IMR-90 (cell line): ENCODE measurements at regions of chr9 and their contacts with region 1.

Region 1: GRCh38 chr9:68443624-68444023 is 87.2 kb downstream of the PGM5 start:
- DNase-seq: no peak
- ATAC-seq: no peak
- H3K4me3 ChIP-seq: no peak overlapping the region
- H3K27ac ChIP-seq: no peak overlapping the region
- H3K4me1 ChIP-seq: 0 out of 2 replicates have a peak, but pooled peaks cover 2% of the 10 kb centered on the region
- H3K27me3 ChIP-seq: no peaks in the 10 kb centered on the region
- CTCF ChIP-seq: no peak
- POLR2A ChIP-seq: no peak
- RAD21 ChIP-seq: no peak

Region 2: DNA sequence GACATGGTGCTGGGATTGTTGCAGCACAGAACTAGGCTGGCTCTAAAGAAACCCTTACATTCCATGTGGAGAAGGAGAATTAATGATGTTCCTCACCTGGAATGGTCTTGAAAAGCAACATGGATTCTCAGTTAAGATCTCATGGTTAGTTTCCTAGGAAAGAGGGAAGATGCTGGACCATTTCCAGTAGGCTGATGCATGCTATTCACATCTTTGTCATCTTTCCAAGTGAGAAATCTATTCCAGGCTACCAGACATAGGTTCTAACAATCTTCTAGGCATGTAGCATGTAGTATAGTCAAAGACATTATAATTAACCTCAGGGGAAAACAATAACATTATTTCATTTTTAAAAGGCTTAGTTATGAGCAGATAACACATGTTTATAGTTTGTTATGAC is 52.7 kb after region 1 on chr9:
- CTCF ChIA-PET with region 1: no interaction called
- POLR2A ChIA-PET with region 1: no interaction called
- dilution Hi-C with region 1: no loop called
- in situ Hi-C with region 1: no loop called
- intact Hi-C with region 1: loop called (anchors 5 kb)
- DNase-seq: peak; percentile 54
- ATAC-seq: no peak
- H3K4me3 ChIP-seq: no peak overlapping the region
- H3K27ac ChIP-seq: no peak overlapping the region
- H3K4me1 ChIP-seq: peaks cover 11% of the 10 kb centered on the region
- H3K27me3 ChIP-seq: no peaks in the 10 kb centered on the region
- CTCF ChIP-seq: no peak
- POLR2A ChIP-seq: no peak
- RAD21 ChIP-seq: no peak